ENCODE measurements at regions of chr15 and their contacts with region 1.

Region 1: DNA sequence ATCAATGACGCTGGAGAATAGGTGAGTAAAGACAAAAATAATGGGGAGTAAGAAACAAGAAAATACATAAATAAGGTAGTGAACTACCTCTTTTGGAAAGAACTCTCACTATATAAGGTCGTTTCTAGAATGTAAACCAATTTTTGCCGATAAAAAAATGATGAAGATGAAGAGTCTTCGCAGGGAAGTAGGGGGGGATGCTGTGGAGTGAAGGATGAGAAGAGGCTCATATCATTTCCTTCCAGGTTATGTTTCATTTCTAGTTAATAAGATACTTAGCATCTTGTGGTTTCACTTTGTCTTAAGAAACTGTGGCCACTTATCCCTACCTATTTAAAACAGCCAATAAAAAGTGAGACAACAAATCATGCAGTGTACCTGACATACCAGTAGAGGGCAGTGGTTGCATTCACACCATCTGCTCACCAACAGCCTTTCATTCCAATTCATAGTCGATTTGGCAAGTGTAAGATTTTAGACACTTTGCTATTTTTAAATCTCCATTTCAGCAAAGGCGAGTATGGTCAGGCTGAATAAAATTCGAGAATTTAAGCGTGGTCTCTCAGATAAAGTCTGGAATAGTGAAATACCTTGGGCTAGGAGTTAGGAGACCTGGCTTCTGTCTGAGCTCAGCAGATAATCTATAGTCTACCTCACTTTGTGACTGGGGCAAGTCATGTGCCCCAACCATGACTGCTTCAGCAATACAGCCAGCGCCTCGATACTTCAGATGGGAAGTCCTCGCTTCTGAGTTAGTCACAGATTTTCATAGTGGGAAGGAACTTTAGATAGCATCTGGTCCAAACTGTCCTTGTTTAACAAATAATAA is 28.9 kb upstream of the ICE2 start:
- DNase-seq: peak; percentile 75
- ATAC-seq: peak; percentile 72 to 91; a peak in 5 of 6 replicates
- H3K4me3 ChIP-seq: no peak overlapping the region
- H3K27ac ChIP-seq: no peak overlapping the region
- H3K4me1 ChIP-seq: 0 out of 3 replicates have a peak, but pooled peaks cover 3% of the 10 kb centered on the region
- CTCF ChIP-seq: peak; percentile 97
- EP300 ChIP-seq: no peak
- POLR2A ChIP-seq: no peak
- RAD21 ChIP-seq: peak; percentile 71 to 82

Region 2: GRCh38 chr15:60444289-60444912 is 63.4 kb before region 1 on chr15:
- CTCF ChIA-PET with region 1: no interaction called
- POLR2A ChIA-PET with region 1: no interaction called
- DNase-seq: peak; percentile 30 to 50
- ATAC-seq: peak in 1 of 2 experiments; percentile 58; a peak in 4 of 6 replicates
- H3K4me3 ChIP-seq: no peak overlapping the region
- H3K27ac ChIP-seq: peak overlapping the region; percentile 32 to 59; a peak in 4 of 6 replicates
- H3K4me1 ChIP-seq: peaks cover 58% of the 10 kb centered on the region
- CTCF ChIP-seq: peak; percentile 92
- EP300 ChIP-seq: no peak
- POLR2A ChIP-seq: no peak
- RAD21 ChIP-seq: peak; percentile 85 to 91

Region 3: GRCh38 chr15:60496853-60497252 is 11.0 kb before region 1 on chr15:
- CTCF ChIA-PET with region 1: interaction called, 13 read pairs
- POLR2A ChIA-PET with region 1: no interaction called
- DNase-seq: no peak
- ATAC-seq: no peak
- H3K4me3 ChIP-seq: no peak overlapping the region
- H3K27ac ChIP-seq: no peak overlapping the region
- H3K4me1 ChIP-seq: no peaks in the 10 kb centered on the region
- CTCF ChIP-seq: no peak
- EP300 ChIP-seq: no peak
- POLR2A ChIP-seq: no peak
- RAD21 ChIP-seq: no peak

Region 4: GRCh38 chr15:60526127-60526625 is 18.4 kb after region 1 on chr15:
- CTCF ChIA-PET with region 1: interaction called, 277 read pairs
- POLR2A ChIA-PET with region 1: interaction called, 3 read pairs
- DNase-seq: no peak
- ATAC-seq: 0 out of 6 replicates have a peak, but pooled peaks of 1 of the 2 experiments have one; percentile 28
- H3K4me3 ChIP-seq: no peak overlapping the region
- H3K27ac ChIP-seq: no peak overlapping the region
- H3K4me1 ChIP-seq: no peaks in the 10 kb centered on the region; the same call in 2 of the 3 replicates
- CTCF ChIP-seq: no peak
- EP300 ChIP-seq: no peak
- POLR2A ChIP-seq: no peak
- RAD21 ChIP-seq: no peak

Region 5: DNA sequence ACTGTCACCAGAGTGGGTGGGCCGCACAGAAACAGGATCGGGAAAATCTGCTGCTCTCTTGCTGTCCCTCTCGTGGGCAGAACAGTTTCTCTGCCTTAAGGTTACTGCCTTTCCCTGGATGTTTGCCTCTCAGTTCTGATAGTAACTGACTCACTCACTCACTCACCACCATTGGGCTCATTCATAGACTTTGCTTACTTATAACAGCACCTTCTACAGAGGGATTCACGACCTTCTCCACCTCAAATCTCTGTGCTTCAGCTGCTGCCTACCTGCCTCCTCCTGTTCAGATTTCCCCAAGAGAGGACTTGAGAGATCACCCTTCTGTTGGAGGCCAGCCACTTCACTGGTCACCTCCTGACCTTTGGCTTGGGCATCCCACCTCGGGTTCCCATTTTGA is 118.9 kb after region 1 on chr15:
- CTCF ChIA-PET with region 1: no interaction called
- POLR2A ChIA-PET with region 1: no interaction called
- DNase-seq: no peak
- ATAC-seq: no peak; a peak in 2 of 6 replicates
- H3K4me3 ChIP-seq: no peak overlapping the region
- H3K27ac ChIP-seq: no peak overlapping the region
- H3K4me1 ChIP-seq: no peaks in the 10 kb centered on the region
- CTCF ChIP-seq: no peak
- EP300 ChIP-seq: no peak
- POLR2A ChIP-seq: no peak
- RAD21 ChIP-seq: no peak

Region 6: GRCh38 chr15:61335998-61336638 is 828.3 kb after region 1 on chr15:
- CTCF ChIA-PET with region 1: no interaction called
- POLR2A ChIA-PET with region 1: no interaction called
- DNase-seq: no peak
- ATAC-seq: no peak
- H3K4me3 ChIP-seq: no peak overlapping the region
- H3K27ac ChIP-seq: no peak overlapping the region
- H3K4me1 ChIP-seq: no peaks in the 10 kb centered on the region
- CTCF ChIP-seq: no peak
- EP300 ChIP-seq: no peak
- POLR2A ChIP-seq: no peak
- RAD21 ChIP-seq: no peak

Measured in A549 (cell line).